KBM-7 (cell line): ENCODE measurements at regions of chr11 and their contacts with region 1.

Region 1: GRCh38 chr11:74255741-74256369 is 55.6 kb downstream of the P4HA3 start:
- DNase-seq: peak; percentile 86

Region 2: DNA sequence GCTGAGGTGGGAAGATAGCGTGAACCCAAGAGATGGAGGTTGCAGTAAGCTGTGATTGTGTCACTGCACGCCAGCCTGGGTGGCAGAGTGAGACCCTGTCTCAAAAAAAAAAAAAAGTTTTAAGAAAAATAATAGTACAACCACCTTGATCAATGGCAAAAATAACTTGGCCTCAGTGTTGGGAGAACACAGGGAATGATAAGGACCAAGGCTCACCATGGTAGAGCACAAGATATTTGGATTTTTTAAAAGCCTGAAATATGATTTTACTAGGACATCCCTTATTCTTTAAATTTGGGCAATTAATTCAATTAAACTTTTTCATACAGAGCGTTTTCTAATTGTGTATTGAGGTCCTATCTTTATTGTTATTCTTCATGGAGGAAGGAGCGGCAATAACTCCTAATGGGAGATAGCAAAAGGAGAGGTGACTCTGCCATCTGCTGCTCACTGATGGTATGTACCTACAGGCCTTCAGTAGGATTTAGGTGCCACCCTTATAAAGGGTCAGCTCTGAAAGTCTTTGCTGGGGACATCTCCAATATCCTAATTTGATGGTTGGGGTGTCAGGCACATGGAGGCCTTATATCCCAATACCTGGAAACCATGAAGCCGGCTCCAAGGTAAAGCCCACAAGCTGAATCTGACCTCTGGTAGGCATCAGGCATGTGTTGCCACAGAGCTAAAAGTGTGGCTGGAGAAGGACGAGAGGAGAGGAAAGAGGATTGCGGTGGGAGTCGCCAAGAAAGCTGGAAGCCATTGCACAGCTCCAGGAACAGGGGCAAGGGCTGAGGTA is 314.6 kb after region 1 on chr11:
- in situ Hi-C with region 1: loop called (anchors 25 kb)
- DNase-seq: peak; percentile 77